Transverse colon (tissue), 4 donors: ENCODE measurements at regions of chr14 and their contacts with region 1.

Region 1: GRCh38 chr14:74979442-74980361 is 23.0 kb upstream of the EIF2B2 start:
- DNase-seq: no peak
- H3K4me3 ChIP-seq: no peak overlapping the region
- H3K27ac ChIP-seq: no peak overlapping the region
- H3K4me1 ChIP-seq: peaks cover 0 to 3% (median 1%) of the 10 kb centered on the region in 4 donors
- H3K27me3 ChIP-seq: no peaks in the 10 kb centered on the region
- CTCF ChIP-seq: no peak
- EP300 ChIP-seq: no peak
- POLR2A ChIP-seq: no peak

Region 2: GRCh38 chr14:74179856-74180255 is 799.8 kb before region 1 on chr14:
- in situ Hi-C with region 1: no loop called
- intact Hi-C with region 1: loop called (anchors 5 kb)
- DNase-seq: no peak
- H3K4me3 ChIP-seq: no peak overlapping the region
- H3K27ac ChIP-seq: no peak overlapping the region
- H3K4me1 ChIP-seq: no peaks in the 10 kb centered on the region
- H3K27me3 ChIP-seq: no peaks in the 10 kb centered on the region
- CTCF ChIP-seq: no peak
- EP300 ChIP-seq: no peak
- POLR2A ChIP-seq: no peak